PC-9 (cell line): ENCODE measurements at regions of chr6 and their contacts with region 1.

Region 1: GRCh38 chr6:71510057-71510713 is 221.6 kb downstream of the OGFRL1 start:
- DNase-seq: peak; percentile 62 to 67
- H3K4me3 ChIP-seq: no peak overlapping the region
- H3K27ac ChIP-seq: no peak overlapping the region
- H3K4me1 ChIP-seq: peaks cover 4% of the 10 kb centered on the region; the same call in 1 of the 2 replicates
- H3K27me3 ChIP-seq: no peaks in the 10 kb centered on the region
- CTCF ChIP-seq: peak; percentile 82

Region 2: DNA sequence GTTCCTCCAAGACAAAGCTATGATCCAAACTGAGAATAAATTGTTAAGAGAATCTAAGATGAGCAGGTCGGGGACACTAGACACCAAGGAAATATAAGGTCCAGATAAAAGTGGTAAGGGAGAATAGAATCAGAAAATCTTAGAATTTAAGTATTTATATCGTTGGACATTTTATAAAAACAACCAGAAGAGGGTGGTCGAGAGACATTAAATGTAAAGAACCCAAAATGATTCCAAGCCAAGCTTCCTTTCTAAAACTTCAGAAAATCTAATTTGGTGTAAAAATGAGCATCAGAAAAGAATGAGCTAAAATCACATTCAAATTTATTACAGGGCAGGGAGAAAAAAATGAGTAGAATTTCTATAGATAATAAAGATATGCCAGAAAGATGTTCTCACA is 319.4 kb before region 1 on chr6:
- CTCF ChIA-PET with region 1: no interaction called
- POLR2A ChIA-PET with region 1: no interaction called
- intact Hi-C with region 1: loop called (anchors 2 kb)
- DNase-seq: no peak
- H3K4me3 ChIP-seq: no peak overlapping the region
- H3K27ac ChIP-seq: no peak overlapping the region
- H3K4me1 ChIP-seq: no peaks in the 10 kb centered on the region; the same call in 1 of the 2 replicates
- H3K27me3 ChIP-seq: no peaks in the 10 kb centered on the region
- CTCF ChIP-seq: peak; percentile 73

Region 3: GRCh38 chr6:71404145-71404966 is 105.8 kb before region 1 on chr6:
- CTCF ChIA-PET with region 1: no interaction called
- POLR2A ChIA-PET with region 1: interaction called, 7 read pairs
- intact Hi-C with region 1: loop called (anchors 1 kb)
- DNase-seq: peak; percentile 41 to 96
- H3K4me3 ChIP-seq: peak overlapping the region; percentile 48
- H3K27ac ChIP-seq: peak overlapping the region; percentile 98
- H3K4me1 ChIP-seq: peaks cover 90% of the 10 kb centered on the region
- H3K27me3 ChIP-seq: no peaks in the 10 kb centered on the region
- CTCF ChIP-seq: no peak

Region 4: GRCh38 chr6:71457929-71458328 is 52.3 kb before region 1 on chr6:
- CTCF ChIA-PET with region 1: no interaction called
- POLR2A ChIA-PET with region 1: no interaction called
- intact Hi-C with region 1: loop called (anchors 2 kb)
- DNase-seq: peak; percentile 39 to 46
- H3K4me3 ChIP-seq: no peak overlapping the region
- H3K27ac ChIP-seq: no peak overlapping the region
- H3K4me1 ChIP-seq: peaks cover 10% of the 10 kb centered on the region; the same call in 1 of the 2 replicates
- H3K27me3 ChIP-seq: no peaks in the 10 kb centered on the region
- CTCF ChIP-seq: no peak

Region 5: GRCh38 chr6:71489747-71490315 is 20.4 kb before region 1 on chr6:
- CTCF ChIA-PET with region 1: no interaction called
- POLR2A ChIA-PET with region 1: no interaction called
- intact Hi-C with region 1: loop called (anchors 1 kb)
- DNase-seq: peak; percentile 83 to 98
- H3K4me3 ChIP-seq: no peak overlapping the region
- H3K27ac ChIP-seq: peak overlapping the region; percentile 81
- H3K4me1 ChIP-seq: peaks cover 25% of the 10 kb centered on the region
- H3K27me3 ChIP-seq: no peaks in the 10 kb centered on the region
- CTCF ChIP-seq: no peak